IMR-90 (cell line): ENCODE measurements at regions of chr17 and their contacts with region 1.

Region 1: GRCh38 chr17:4771519-4772234 is at the start of gene TM4SF5:
- DNase-seq: no peak
- ATAC-seq: no peak
- H3K4me3 ChIP-seq: no peak within 1 kb of the TSS
- H3K27ac ChIP-seq: no peak within 1 kb of the TSS
- H3K4me1 ChIP-seq: no peaks in the 10 kb centered on the region
- H3K27me3 ChIP-seq: peaks cover 30% of the 10 kb centered on the region
- CTCF ChIP-seq: no peak
- POLR2A ChIP-seq: no peak
- RAD21 ChIP-seq: no peak
- total RNA-seq, gene TM4SF5: not detected in 2 replicates

Region 2: GRCh38 chr17:4709794-4710692 is 61.6 kb before region 1 on chr17 and contains the start of gene ARRB2:
- CTCF ChIA-PET with region 1: no interaction called
- POLR2A ChIA-PET with region 1: no interaction called
- dilution Hi-C with region 1: no loop called
- in situ Hi-C with region 1: no loop called
- intact Hi-C with region 1: no loop called
- DNase-seq: peak; percentile 98
- ATAC-seq: peak; percentile 96
- H3K4me3 ChIP-seq: peak within 1 kb of the TSS; percentile 49
- H3K27ac ChIP-seq: no peak within 1 kb of the TSS; the same call in 1 of the 2 replicates
- H3K4me1 ChIP-seq: peaks cover 9% of the 10 kb centered on the region
- H3K27me3 ChIP-seq: no peaks in the 10 kb centered on the region
- CTCF ChIP-seq: peak; percentile 77
- POLR2A ChIP-seq: no peak
- RAD21 ChIP-seq: peak; percentile 80
- total RNA-seq, gene ARRB2: 3.9 and 6.1 TPM in 2 replicates

Region 3: DNA sequence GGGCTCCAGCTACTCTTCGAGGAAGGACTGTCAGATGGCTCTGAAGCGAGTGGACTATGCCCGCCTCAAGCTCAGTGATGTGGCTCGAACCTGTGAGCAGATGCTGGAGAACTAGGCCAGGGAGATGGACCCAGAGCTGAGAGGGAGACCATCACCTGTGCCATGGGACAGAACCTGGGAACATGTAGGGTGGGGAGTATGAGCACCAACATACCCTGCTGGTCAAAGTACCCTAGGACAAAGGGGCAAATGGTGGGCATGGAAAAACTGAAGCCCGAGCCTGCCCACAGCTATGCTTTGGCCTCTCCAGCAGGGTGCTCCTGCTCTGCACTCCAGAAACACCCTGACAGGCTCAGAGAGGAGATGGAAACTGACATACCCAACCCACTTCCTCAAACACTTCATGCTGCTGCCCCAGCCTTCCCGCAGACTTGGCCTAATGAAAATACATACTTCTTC is 38.6 kb before region 1 on chr17:
- CTCF ChIA-PET with region 1: no interaction called
- POLR2A ChIA-PET with region 1: no interaction called
- dilution Hi-C with region 1: no loop called
- in situ Hi-C with region 1: no loop called
- intact Hi-C with region 1: loop called (anchors 2 kb)
- DNase-seq: no peak
- ATAC-seq: no peak
- H3K4me3 ChIP-seq: no peak overlapping the region
- H3K27ac ChIP-seq: no peak overlapping the region
- H3K4me1 ChIP-seq: no peaks in the 10 kb centered on the region
- H3K27me3 ChIP-seq: peaks cover 4% of the 10 kb centered on the region
- CTCF ChIP-seq: 0 out of 2 replicates have a peak, but pooled peaks have one; percentile 2
- POLR2A ChIP-seq: no peak
- RAD21 ChIP-seq: no peak